GM10248 (cell line): ENCODE measurements at regions of chr5 and their contacts with region 1.

Region 1: GRCh38 chr5:73550016-73550415 is 15.4 kb downstream of the ANKRA2 start:
- DNase-seq: no peak
- CTCF ChIP-seq: no peak

Region 2: DNA sequence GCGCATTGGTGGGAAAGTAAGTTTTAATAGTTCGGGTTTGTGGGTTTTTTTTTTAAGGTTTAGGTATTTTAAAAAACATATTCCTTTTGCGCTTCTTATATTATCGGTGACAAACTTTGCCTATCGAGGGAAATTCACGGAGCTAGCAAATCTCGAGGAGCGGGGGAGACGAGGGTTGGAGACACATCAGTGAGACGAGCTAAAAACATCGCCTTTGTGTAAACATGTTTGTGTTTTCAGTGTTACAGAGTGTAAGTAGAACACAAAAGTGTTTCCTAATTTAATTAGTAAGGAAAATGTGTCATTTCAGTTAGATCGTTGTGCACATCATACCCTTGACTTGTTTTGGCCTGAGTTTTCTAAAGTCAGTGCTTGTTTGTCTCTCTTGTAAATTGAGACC is 50.8 kb before region 1 on chr5:
- CTCF ChIA-PET with region 1: no interaction called
- POLR2A ChIA-PET with region 1: interaction called, 14 read pairs
- DNase-seq: no peak
- CTCF ChIP-seq: no peak